Ovary (tissue), 10 donors: ENCODE measurements at regions of chr7 and their contacts with region 1.

Region 1: GRCh38 chr7:39623018-39623731 is at the start of gene RALA:
- DNase-seq: peak; percentile 91 to 94 (median 92)
- H3K4me3 ChIP-seq: peak within 1 kb of the TSS; percentile 82
- H3K27ac ChIP-seq: peak within 1 kb of the TSS; percentile 82 to 84
- H3K4me1 ChIP-seq: peaks cover 12% of the 10 kb centered on the region
- H3K27me3 ChIP-seq: no peaks in the 10 kb centered on the region
- CTCF ChIP-seq: no peak
- EP300 ChIP-seq: no peak
- POLR2A ChIP-seq: peak; percentile 65
- total RNA-seq, gene RALA: 13.9 to 32.9 (median 25.2) TPM

Region 2: GRCh38 chr7:39732837-39733804 is 109.9 kb after region 1 on chr7:
- intact Hi-C with region 1: loop called in 1 of 4 experiments (anchors 10 kb)
- DNase-seq: peak; percentile 94 to 96 (median 94)
- H3K4me3 ChIP-seq: peak overlapping the region; percentile 48
- H3K27ac ChIP-seq: peak overlapping the region; percentile 58 to 60
- H3K4me1 ChIP-seq: peaks cover 4% of the 10 kb centered on the region
- H3K27me3 ChIP-seq: no peaks in the 10 kb centered on the region
- CTCF ChIP-seq: no peak
- EP300 ChIP-seq: no peak
- POLR2A ChIP-seq: peak; percentile 21